ENCODE measurements at regions of chr20 and their contacts with region 1.

Region 1: DNA sequence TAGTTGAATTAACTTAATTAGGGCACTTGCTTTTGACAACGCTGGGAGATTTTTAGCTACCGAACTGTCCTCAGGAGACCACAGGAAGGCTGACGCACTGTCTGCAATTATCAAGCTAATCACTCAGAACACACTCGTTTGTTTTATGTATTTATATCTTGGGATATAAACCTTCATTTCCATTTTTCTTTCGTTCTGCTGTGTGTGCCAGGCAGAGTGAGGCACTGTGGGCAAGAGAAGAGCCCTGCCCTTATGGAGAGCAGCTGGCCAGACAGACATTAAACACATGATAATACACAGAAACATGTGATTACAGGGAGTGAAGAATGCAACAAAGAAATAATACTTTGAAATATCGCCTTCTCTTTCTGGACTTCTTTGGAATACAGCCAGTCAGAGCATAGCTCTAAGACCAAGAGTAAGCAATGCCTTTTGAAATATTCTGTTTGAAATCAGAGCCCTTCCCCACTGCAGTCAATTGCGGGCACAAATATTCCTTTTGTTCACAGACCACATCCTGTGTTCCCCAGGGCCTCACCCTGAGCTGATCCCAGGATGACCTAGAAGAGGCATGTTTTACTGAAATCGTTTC is 96.8 kb downstream of the ANKRD60 start:
- DNase-seq: peak; percentile 87
- H3K4me3 ChIP-seq: no peak overlapping the region
- H3K27ac ChIP-seq: peak overlapping the region; percentile 90
- H3K4me1 ChIP-seq: peaks cover 64% of the 10 kb centered on the region
- H3K27me3 ChIP-seq: no peaks in the 10 kb centered on the region
- CTCF ChIP-seq: no peak

Region 2: DNA sequence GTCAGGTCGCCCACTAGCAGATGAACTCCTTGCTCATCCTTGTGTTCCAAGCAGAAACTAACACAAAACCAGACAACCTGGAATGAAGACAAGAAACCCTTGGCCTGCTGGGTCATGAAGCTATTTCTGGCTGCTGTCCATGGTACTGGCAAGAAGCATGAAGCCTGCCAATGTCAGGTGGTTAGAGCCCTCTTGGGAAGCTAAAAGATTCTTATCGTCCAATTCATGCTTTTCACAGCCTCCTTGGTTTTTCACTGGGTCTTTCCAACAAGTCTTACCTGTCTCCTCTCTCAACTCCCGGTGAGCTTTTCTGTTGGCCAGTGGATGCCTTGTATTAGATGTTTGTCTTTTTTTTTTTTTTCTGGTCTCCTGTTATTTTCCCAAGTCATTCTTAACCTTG is 83.5 kb before region 1 on chr20:
- CTCF ChIA-PET with region 1: no interaction called
- dilution Hi-C with region 1: no loop called
- in situ Hi-C with region 1: no loop called
- intact Hi-C with region 1: no loop called
- DNase-seq: peak; percentile 48
- H3K4me3 ChIP-seq: no peak overlapping the region
- H3K27ac ChIP-seq: no peak overlapping the region
- H3K4me1 ChIP-seq: no peaks in the 10 kb centered on the region
- H3K27me3 ChIP-seq: no peaks in the 10 kb centered on the region
- CTCF ChIP-seq: no peak

Region 3: DNA sequence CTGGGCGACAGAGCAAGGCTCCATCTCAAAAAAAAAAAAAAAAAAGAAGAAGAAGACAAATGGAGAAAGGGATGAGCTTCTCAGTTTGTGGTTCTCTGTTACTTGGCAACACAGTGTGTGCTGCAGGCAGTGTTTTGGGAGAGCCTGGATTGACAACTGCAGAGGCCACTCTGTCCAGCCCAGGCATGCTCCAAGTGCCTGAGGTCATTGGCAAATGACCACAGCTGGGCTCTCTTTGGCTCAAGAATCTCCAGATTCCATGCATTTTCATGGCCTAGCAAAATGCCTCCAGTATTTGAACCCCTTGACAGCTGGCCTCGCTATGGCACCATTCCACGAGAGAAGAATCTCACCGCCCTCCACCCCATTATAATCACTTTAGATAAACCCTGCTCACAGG is 29.4 kb before region 1 on chr20:
- CTCF ChIA-PET with region 1: no interaction called
- dilution Hi-C with region 1: loop called (anchors 5 kb)
- in situ Hi-C with region 1: no loop called
- intact Hi-C with region 1: loop called (anchors 1 kb)
- DNase-seq: peak; percentile 88
- H3K4me3 ChIP-seq: no peak overlapping the region
- H3K27ac ChIP-seq: peak overlapping the region; percentile 97
- H3K4me1 ChIP-seq: peaks cover 24% of the 10 kb centered on the region
- H3K27me3 ChIP-seq: no peaks in the 10 kb centered on the region
- CTCF ChIP-seq: no peak

Region 4: GRCh38 chr20:58112017-58112781 is 19.4 kb before region 1 on chr20:
- CTCF ChIA-PET with region 1: interaction called, 6 read pairs
- dilution Hi-C with region 1: no loop called
- in situ Hi-C with region 1: no loop called
- intact Hi-C with region 1: loop called (anchors 1 kb)
- DNase-seq: peak; percentile 96
- H3K4me3 ChIP-seq: no peak overlapping the region
- H3K27ac ChIP-seq: peak overlapping the region; percentile 95
- H3K4me1 ChIP-seq: peaks cover 39% of the 10 kb centered on the region
- H3K27me3 ChIP-seq: no peaks in the 10 kb centered on the region
- CTCF ChIP-seq: no peak

Region 5: DNA sequence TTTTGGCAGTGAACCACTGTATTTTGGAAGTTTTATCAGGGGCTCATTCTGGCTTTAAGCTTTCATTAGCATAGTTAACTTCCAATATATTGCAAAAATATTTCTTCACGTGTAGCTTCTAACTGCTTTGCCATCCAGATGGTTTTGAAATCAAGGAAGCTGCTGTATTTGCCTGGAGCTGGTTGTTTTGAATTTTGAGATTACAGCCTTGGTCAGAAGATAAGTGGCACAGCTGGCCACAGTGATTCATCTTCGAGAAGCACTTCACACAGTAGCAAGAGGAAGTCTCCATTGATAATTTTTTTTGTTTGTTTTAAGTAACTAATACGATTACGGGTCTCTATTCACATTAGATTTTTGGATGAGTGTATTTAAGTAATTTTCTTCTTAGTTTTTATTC is 379.7 kb after region 1 on chr20:
- CTCF ChIA-PET with region 1: no interaction called
- dilution Hi-C with region 1: no loop called
- in situ Hi-C with region 1: no loop called
- intact Hi-C with region 1: no loop called
- DNase-seq: peak; percentile 18
- H3K4me3 ChIP-seq: no peak overlapping the region
- H3K27ac ChIP-seq: no peak overlapping the region
- H3K4me1 ChIP-seq: peaks cover 14% of the 10 kb centered on the region
- H3K27me3 ChIP-seq: peaks cover 5% of the 10 kb centered on the region
- CTCF ChIP-seq: no peak

Measured in mammary epithelial cell (primary cell).